Transverse colon (tissue), 4 donors: ENCODE measurements at regions of chr18 and their contacts with region 1.

Region 1: DNA sequence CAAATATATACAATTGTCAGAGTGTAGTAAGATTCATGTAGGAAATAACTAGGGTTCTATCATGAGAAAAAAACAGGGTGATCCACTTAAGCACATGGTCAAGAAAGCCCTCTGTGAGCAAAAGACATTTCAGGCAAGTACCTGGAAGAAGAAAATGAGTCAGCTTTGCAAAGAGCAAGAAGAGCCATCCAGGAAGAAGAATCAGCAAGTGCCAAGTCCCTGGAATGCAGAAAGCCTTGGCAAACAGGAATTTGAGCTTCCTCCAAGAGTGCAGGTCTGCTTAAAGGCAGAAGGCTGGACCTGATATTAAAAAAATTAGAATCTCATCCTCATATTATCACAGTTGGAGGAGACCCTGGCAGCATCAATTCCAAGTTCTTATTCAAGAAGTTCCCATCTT is 188.5 kb upstream of the CELF4 start:
- DNase-seq: no peak
- H3K4me3 ChIP-seq: no peak overlapping the region
- H3K27ac ChIP-seq: no peak overlapping the region
- H3K4me1 ChIP-seq: no peaks in the 10 kb centered on the region
- H3K27me3 ChIP-seq: no peaks in the 10 kb centered on the region
- CTCF ChIP-seq: no peak
- EP300 ChIP-seq: no peak
- POLR2A ChIP-seq: no peak

Region 2: GRCh38 chr18:37734406-37734805 is 19.7 kb before region 1 on chr18:
- in situ Hi-C with region 1: no loop called
- intact Hi-C with region 1: no loop called
- DNase-seq: no peak
- H3K4me3 ChIP-seq: no peak overlapping the region
- H3K27ac ChIP-seq: no peak overlapping the region
- H3K4me1 ChIP-seq: no peaks in the 10 kb centered on the region
- H3K27me3 ChIP-seq: no peaks in the 10 kb centered on the region
- CTCF ChIP-seq: no peak
- EP300 ChIP-seq: no peak
- POLR2A ChIP-seq: no peak

Region 3: DNA sequence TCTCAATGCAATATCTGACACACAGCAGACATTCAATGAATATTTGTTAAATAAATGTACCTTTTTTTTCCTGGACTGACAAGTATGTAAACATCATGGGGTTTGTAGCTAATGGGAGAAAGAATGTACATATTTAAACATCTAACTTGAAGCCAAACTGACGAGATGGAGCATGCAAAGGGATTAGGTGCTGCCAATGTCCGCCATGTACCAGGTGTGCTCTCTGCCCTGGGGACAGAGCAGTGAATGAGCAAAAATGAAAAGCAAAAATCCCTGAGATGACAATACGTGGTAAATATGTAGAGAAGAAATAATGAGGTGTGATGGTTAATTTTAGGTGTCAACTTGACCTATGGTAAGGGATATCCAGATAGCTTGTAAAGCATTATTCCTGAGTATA is 58.8 kb after region 1 on chr18:
- in situ Hi-C with region 1: loop called in 1 of 4 experiments (anchors 10 kb)
- intact Hi-C with region 1: no loop called
- DNase-seq: no peak
- H3K4me3 ChIP-seq: no peak overlapping the region
- H3K27ac ChIP-seq: no peak overlapping the region
- H3K4me1 ChIP-seq: no peaks in the 10 kb centered on the region
- H3K27me3 ChIP-seq: no peaks in the 10 kb centered on the region
- CTCF ChIP-seq: no peak
- EP300 ChIP-seq: no peak
- POLR2A ChIP-seq: no peak